Activated CD4-positive, alpha-beta memory T cell treated with anti-CD3 and anti-CD28 coated beads for 36 hours (primary cell): ENCODE measurements at regions of chr2 and their contacts with region 1.

Region 1: DNA sequence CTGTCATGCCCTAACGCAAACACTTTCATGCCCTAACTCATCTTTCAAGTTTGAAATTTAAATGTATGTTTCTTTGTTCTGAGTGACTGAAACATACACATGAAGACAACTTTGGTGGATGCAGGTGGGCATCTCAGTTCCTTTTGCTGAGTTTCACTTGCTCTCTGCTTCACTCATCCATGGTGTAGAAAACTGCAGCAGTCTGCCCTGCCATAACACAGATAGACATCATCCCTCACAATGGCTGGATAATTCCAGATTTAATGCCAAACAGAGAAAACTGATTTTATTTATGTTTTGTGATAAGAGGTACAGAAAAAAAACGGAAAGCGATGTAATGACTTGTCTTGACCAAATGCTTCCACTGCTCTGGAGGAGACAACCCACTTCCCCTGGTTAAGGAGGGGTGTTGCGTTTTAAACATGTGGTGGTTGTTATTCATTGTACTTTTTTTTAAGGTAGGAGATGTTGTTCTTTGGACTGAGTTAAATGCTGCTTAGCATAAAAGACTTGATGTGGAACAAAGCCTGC is 70.4 kb downstream of the RHBDD1 start:
- DNase-seq: no peak
- H3K4me3 Mint-ChIP-seq: no peak overlapping the region
- H3K27ac Mint-ChIP-seq: no peak overlapping the region
- H3K4me1 Mint-ChIP-seq: peaks cover 26% of the 10 kb centered on the region
- H3K27me3 Mint-ChIP-seq: no peaks in the 10 kb centered on the region

Region 2: GRCh38 chr2:226873051-226873620 is 33.1 kb before region 1 on chr2:
- CTCF ChIA-PET with region 1: no interaction called
- POLR2A ChIA-PET with region 1: interaction called, 3 read pairs
- intact Hi-C with region 1: loop called (anchors 1 kb)
- DNase-seq: peak; percentile 24
- H3K4me3 Mint-ChIP-seq: no peak overlapping the region
- H3K27ac Mint-ChIP-seq: peak overlapping the region; percentile 77
- H3K4me1 Mint-ChIP-seq: peaks cover 24% of the 10 kb centered on the region
- H3K27me3 Mint-ChIP-seq: no peaks in the 10 kb centered on the region

Region 3: DNA sequence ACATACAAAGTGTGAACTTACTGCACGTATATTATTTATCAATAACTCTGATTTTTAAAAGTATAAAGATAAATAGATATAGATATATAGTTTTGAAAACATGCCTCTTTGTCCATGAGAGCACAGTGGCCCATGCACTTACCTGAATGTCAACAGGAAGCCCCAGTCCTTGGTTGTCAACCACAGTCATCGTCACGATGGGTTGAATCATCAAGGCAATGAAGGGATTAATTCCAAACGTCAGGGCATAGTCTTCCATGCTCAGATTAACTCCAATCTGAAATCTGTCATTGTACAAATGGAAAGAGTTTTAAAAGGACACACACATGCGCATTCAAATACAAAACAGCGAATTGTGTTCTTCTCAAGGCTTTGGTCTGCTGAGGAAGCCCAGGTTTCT is 726.6 kb after region 1 on chr2:
- CTCF ChIA-PET with region 1: no interaction called
- POLR2A ChIA-PET with region 1: no interaction called
- intact Hi-C with region 1: no loop called
- DNase-seq: no peak
- H3K4me3 Mint-ChIP-seq: no peak overlapping the region
- H3K27ac Mint-ChIP-seq: no peak overlapping the region
- H3K4me1 Mint-ChIP-seq: no peaks in the 10 kb centered on the region
- H3K27me3 Mint-ChIP-seq: peaks cover 27% of the 10 kb centered on the region